Activated B cell treated with CpG ODN at 0.5 μM for 24 hours (primary cell): ENCODE measurements at regions of chr19 and their contacts with region 1.

Region 1: GRCh38 chr19:51422053-51422448 is 4.6 kb upstream of the SIGLEC10 start:
- DNase-seq: peak; percentile 90
- ATAC-seq: peak; percentile 22
- H3K4me3 Mint-ChIP-seq: no peak overlapping the region
- H3K27ac Mint-ChIP-seq: no peak overlapping the region
- H3K4me1 Mint-ChIP-seq: peaks cover 34% of the 10 kb centered on the region
- H3K27me3 Mint-ChIP-seq: peaks cover 5% of the 10 kb centered on the region
- CTCF ChIP-seq: peak; percentile 90

Region 2: GRCh38 chr19:51166846-51167490 is 255.1 kb before region 1 on chr19:
- CTCF ChIA-PET with region 1: no interaction called
- POLR2A ChIA-PET with region 1: no interaction called
- intact Hi-C with region 1: no loop called
- DNase-seq: no peak
- ATAC-seq: no peak
- H3K4me3 Mint-ChIP-seq: no peak overlapping the region
- H3K27ac Mint-ChIP-seq: no peak overlapping the region
- H3K4me1 Mint-ChIP-seq: no peaks in the 10 kb centered on the region
- H3K27me3 Mint-ChIP-seq: peaks cover 25% of the 10 kb centered on the region
- CTCF ChIP-seq: no peak

Region 3: GRCh38 chr19:51246164-51246552 is 175.9 kb before region 1 on chr19:
- CTCF ChIA-PET with region 1: no interaction called
- POLR2A ChIA-PET with region 1: no interaction called
- intact Hi-C with region 1: no loop called
- DNase-seq: no peak
- ATAC-seq: no peak
- H3K4me3 Mint-ChIP-seq: no peak overlapping the region
- H3K27ac Mint-ChIP-seq: no peak overlapping the region
- H3K4me1 Mint-ChIP-seq: no peaks in the 10 kb centered on the region
- H3K27me3 Mint-ChIP-seq: peaks cover 11% of the 10 kb centered on the region
- CTCF ChIP-seq: no peak

Region 4: GRCh38 chr19:51393959-51394836 is 27.9 kb before region 1 on chr19:
- CTCF ChIA-PET with region 1: interaction called, 11 read pairs
- POLR2A ChIA-PET with region 1: interaction called, 64 read pairs
- intact Hi-C with region 1: loop called (anchors 1 kb)
- DNase-seq: peak; percentile 76
- ATAC-seq: peak; percentile 87
- H3K4me3 Mint-ChIP-seq: peak overlapping the region; percentile 83
- H3K27ac Mint-ChIP-seq: peak overlapping the region; percentile 90
- H3K4me1 Mint-ChIP-seq: peaks cover 37% of the 10 kb centered on the region
- H3K27me3 Mint-ChIP-seq: no peaks in the 10 kb centered on the region
- CTCF ChIP-seq: no peak

Region 5: DNA sequence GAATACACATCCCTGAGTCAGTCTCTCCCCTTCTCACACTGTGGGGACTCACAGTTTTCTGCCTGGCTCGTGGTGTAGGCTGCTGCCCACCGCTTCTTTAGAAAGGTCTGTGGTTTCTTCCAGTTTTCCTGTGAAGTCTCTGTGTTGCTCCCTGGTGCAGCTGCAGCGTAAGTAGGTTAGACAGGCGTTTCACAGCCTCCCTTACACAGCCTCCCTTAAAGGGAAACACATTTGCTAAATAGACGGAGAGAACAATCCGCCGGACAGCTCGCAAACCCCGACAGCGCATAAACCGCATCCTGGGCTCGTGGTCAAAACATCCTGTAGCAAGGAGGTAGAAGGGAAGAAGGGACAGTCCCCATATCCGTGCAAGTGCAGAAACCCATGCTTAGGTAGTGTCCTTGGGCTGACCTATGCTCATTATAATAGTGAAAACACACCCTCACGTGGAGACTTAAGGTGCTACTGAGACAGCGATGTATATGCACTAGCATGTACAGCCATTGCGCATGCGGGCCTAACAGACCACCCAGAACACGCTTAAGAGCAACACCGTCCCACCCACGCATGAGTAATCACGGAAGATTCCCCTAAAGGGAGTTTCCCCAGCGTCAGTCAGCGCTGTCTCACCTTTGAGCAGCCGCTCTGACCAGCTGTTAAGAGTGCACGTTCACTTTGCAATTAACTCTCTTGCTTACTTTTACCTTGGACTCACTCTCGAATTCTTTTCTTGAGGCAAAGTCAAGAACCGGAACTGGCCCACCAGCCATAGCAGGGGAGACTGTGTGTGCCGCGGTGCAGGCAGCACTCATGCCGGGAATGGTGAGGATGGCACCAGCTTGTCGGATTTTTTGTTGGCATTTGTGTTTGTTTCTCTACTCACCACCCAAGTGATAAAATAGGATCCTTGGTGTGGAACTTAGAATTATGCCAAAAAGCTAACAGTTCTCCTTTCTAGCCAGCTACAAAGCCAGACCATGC is 19.6 kb after region 1 on chr19:
- CTCF ChIA-PET with region 1: interaction called, 38 read pairs
- POLR2A ChIA-PET with region 1: interaction called, 26 read pairs
- intact Hi-C with region 1: loop called (anchors 1 kb)
- DNase-seq: peak; percentile 48
- ATAC-seq: peak; percentile 89
- H3K4me3 Mint-ChIP-seq: peak overlapping the region; percentile 71
- H3K27ac Mint-ChIP-seq: peak overlapping the region; percentile 77
- H3K4me1 Mint-ChIP-seq: peaks cover 30% of the 10 kb centered on the region
- H3K27me3 Mint-ChIP-seq: peaks cover 16% of the 10 kb centered on the region
- CTCF ChIP-seq: no peak

Region 6: GRCh38 chr19:51514866-51515481 is 92.9 kb after region 1 on chr19:
- CTCF ChIA-PET with region 1: interaction called, 3 read pairs
- POLR2A ChIA-PET with region 1: no interaction called
- intact Hi-C with region 1: loop called (anchors 2 kb)
- DNase-seq: no peak
- ATAC-seq: no peak
- H3K4me3 Mint-ChIP-seq: no peak overlapping the region
- H3K27ac Mint-ChIP-seq: no peak overlapping the region
- H3K4me1 Mint-ChIP-seq: peaks cover 7% of the 10 kb centered on the region
- H3K27me3 Mint-ChIP-seq: peaks cover 2% of the 10 kb centered on the region
- CTCF ChIP-seq: peak; percentile 72

Region 7: GRCh38 chr19:51651216-51651846 is 229.3 kb after region 1 on chr19:
- CTCF ChIA-PET with region 1: interaction called, 5 read pairs
- POLR2A ChIA-PET with region 1: interaction called, 7 read pairs
- intact Hi-C with region 1: loop called (anchors 1 kb)
- DNase-seq: peak; percentile 53
- ATAC-seq: peak; percentile 86
- H3K4me3 Mint-ChIP-seq: peak overlapping the region; percentile 33
- H3K27ac Mint-ChIP-seq: peak overlapping the region; percentile 81
- H3K4me1 Mint-ChIP-seq: peaks cover 61% of the 10 kb centered on the region
- H3K27me3 Mint-ChIP-seq: no peaks in the 10 kb centered on the region
- CTCF ChIP-seq: no peak

Region 8: GRCh38 chr19:51703575-51704515 is 281.8 kb after region 1 on chr19:
- CTCF ChIA-PET with region 1: no interaction called
- POLR2A ChIA-PET with region 1: interaction called, 11 read pairs
- intact Hi-C with region 1: no loop called
- DNase-seq: peak; percentile 98
- ATAC-seq: peak; percentile 92
- H3K4me3 Mint-ChIP-seq: peak overlapping the region; percentile 88
- H3K27ac Mint-ChIP-seq: peak overlapping the region; percentile 85
- H3K4me1 Mint-ChIP-seq: peaks cover 33% of the 10 kb centered on the region
- H3K27me3 Mint-ChIP-seq: peaks cover 16% of the 10 kb centered on the region
- CTCF ChIP-seq: no peak